Cardiac septum (tissue), 1 donor: ENCODE measurements at regions of chr19 and their contacts with region 1.

Region 1: DNA sequence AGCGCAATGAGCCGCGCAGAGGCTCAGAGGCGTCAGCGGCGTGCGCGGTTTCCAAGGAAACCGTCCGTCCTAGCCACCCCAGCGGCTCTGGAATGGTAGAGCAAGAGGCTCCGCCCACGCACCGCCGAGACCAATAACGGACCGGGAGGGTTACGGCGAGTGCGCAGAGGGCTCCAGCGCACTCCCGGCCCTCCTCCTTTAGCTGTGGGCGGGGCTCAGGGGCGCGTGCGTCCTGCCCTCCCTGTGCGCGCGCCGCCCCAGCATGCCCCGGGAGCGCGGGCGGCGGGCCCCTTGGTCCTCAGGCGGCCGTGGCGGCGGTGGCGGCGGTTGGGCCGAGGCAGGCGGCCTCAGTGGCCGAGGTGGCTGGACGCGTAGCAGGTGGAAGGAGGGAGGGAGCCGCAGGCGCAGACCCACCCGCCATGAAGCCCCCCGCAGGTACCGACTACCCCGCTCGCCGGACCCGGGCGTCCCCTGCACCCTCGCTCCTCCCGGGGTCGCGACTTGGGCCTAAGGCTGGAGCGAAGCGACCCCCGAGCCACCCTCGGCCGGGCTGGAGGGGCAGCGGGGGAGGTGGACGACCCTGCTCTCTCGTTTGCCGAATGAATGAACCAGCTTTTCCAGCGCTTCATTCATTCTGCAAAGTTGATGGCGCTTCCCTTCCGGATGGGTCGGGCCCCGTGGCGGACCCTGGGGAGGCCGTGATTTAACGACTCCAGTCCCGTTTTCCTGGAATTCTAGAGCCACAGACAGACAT is at the start of gene THOP1:
- DNase-seq: peak; percentile 98
- total RNA-seq, gene THOP1: 34.6 TPM

Region 2: GRCh38 chr19:2722541-2723344 is 62.7 kb before region 1 on chr19:
- intact Hi-C with region 1: no loop called
- DNase-seq: peak; percentile 89

Region 3: GRCh38 chr19:2739602-2740313 is 45.7 kb before region 1 on chr19 and contains the start of gene SLC39A3:
- intact Hi-C with region 1: loop called (anchors 2 kb)
- DNase-seq: peak; percentile 99
- total RNA-seq, gene SLC39A3: 17.9 TPM

Region 4: DNA sequence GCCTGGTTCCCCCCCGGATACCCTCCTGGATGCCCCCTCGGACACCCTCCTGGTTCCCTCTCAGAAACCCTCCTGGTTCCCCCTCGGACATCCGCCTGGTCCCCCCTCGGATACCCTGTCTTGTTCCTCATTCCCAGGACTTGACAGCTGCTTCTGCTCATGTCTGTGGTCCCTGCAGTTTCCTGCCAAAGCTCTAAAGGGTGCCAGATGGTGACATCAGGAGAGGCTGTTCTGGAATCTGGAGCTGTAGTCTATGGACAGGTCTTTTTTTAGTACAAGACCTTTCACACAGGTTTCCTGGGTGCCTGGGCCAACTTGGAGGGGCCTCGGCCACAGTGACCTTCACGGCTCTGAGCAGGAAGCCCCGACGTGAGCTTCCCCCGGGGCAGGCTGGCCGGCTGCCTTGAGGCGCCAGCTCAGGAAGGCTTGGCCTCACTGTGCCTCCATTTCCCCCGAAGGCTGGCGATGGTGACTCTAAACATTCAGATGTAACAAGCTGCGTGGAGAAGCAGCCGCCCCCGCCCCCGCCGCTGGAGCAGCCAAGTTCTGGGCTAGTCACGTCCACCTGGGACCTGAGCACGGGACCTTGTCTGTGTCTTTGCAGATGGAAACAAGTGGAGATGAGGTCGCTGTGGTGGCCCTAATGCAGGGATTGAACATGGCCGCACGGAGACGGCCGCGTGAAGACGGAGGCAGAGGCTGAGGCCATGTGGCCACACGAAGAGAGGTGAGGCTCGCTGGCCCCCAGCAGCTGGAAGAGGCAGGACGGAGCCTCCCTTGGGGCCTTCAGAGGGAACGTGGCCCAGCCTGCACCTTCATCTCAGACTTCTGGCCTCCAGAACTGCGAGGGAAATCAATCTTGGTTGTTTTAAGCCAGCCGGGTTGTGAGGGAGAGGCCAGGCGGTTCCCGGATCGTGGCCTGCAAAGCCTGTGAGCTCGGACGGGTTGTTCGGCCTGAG is 15.1 kb before region 1 on chr19:
- intact Hi-C with region 1: no loop called
- DNase-seq: peak; percentile 81

Region 5: DNA sequence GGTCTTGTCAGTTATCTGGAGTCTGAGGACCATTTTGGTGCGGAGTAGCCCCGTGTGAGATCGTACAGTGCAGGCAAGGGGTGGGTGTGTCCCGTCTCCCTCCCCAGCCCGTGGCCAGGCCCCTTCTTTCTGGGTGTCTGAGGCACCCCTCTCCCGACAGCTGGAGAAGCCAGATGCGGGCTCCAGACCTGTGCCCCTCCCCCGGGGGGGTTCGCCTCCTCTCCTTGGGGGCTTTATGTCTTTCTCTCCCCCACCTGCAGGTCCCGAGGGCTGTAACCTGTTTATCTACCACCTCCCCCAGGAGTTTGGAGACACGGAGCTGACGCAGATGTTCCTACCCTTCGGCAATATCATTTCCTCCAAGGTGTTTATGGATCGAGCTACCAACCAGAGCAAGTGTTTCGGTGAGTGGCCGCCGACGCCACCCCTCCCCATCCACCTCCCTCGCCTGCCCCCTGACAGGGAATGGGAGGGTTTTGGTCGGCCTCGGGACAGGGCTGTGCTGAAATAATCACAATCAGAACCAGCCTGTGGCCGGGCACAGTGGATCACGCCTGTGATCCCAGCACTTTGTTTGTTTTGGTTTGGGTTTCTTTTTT is 504.6 kb after region 1 on chr19:
- intact Hi-C with region 1: no loop called
- DNase-seq: no peak